ENCODE measurements at regions of chr15 and their contacts with region 1.

Region 1: GRCh38 chr15:81274931-81275707 is 48.8 kb downstream of the STARD5 start:
- DNase-seq: peak; percentile 81 to 83
- H3K4me3 ChIP-seq: no peak overlapping the region
- H3K27ac ChIP-seq: peak overlapping the region; percentile 79 to 83
- H3K4me1 ChIP-seq: peaks cover 0 to 4% of the 10 kb centered on the region in 2 donors
- H3K27me3 ChIP-seq: no peaks in the 10 kb centered on the region
- CTCF ChIP-seq: peak; percentile 81 to 89 (median 85)
- POLR2A ChIP-seq: no peak

Region 2: DNA sequence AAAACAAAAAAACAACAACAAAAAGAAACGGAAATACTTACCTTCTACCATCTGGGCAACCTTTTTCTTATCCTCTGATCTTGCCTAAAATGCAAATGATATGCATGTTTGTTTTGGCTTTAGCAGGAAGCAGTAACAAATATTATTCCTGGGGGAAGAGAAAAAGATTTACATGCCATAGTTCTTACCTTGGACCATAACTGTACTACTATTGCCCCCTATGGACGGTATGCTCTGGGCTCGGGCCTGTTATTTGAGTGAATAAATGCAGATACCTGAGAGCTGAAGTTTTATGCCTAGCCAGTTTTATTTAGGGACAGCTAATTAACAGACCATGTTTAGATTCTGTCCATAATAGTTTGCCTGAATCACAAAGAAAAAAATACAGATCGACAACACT is 61.4 kb after region 1 on chr15:
- intact Hi-C with region 1: no loop called
- DNase-seq: no peak
- H3K4me3 ChIP-seq: no peak overlapping the region
- H3K27ac ChIP-seq: no peak overlapping the region
- H3K4me1 ChIP-seq: peaks cover 0 to 6% of the 10 kb centered on the region in 2 donors
- H3K27me3 ChIP-seq: no peaks in the 10 kb centered on the region
- CTCF ChIP-seq: peak in 1 of 4 experiments; percentile 13
- POLR2A ChIP-seq: no peak

Region 3: DNA sequence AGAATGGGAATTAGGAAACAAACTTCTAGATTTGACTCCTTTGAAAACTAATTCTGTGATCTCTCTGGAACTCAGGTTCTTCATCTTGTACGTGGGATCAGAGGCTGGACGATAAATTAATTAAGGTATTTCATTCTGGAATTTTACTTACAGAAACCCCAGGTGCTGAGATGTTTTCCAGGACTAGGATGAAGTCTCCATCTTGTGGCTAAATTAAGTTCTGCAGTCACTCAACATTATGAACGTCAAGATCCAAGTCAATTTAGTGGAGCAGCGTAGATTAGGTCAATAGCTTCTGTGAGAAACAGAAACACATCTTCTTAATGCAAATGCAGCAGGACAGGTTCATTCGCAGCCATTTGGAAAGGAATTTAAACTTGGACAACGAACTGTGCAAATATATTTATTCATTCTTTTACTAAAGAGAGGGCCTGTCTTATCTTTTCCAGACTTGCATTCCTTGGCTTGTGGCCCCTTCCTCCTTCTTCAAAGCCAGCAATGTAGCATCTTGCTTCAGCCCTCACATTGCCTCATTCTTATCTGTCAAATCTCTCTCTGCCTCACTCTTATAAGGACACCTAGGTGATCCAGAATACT is 125.6 kb after region 1 on chr15:
- intact Hi-C with region 1: loop called (anchors 5 kb)
- DNase-seq: no peak
- H3K4me3 ChIP-seq: no peak overlapping the region
- H3K27ac ChIP-seq: peak overlapping the region; percentile 44 to 72
- H3K4me1 ChIP-seq: peaks cover 0 to 5% of the 10 kb centered on the region in 2 donors
- H3K27me3 ChIP-seq: no peaks in the 10 kb centered on the region
- CTCF ChIP-seq: peak; percentile 62 to 78 (median 73)
- POLR2A ChIP-seq: no peak

Measured in uterus (tissue), 4 donors.